HepG2 (cell line): ENCODE measurements at regions of chr3 and their contacts with region 1.

Region 1: DNA sequence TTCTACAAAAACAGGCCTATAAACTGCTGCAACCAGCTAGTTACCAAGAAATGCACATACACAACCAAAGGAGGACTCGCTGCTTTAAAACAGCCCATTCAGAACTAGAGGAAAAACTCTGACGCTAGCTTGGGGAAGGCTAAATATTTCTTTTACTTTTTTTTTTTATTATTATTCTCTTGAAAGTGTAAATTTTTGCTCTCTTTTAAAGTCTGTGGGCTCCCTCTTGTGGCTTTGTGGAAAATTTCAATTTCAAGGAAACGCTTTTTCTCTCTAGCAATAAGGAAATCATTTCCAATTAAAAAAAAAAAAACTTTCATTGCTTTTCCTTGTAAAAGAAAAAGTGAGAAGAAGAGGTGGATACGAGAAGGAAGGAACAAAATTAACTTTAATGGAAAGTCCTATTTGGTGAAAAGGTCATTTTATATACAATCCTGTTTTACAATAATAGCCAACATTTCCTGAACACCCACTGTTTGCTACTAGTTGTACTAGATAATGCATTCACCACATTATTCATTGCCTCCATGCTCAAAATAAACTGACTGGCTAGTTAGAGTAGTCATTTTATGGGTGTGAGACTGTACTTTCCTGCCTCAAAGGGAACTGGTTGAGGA is 51.2 kb upstream of the SAMMSON start:
- DNase-seq: peak; percentile 4
- ATAC-seq: no peak
- H3K4me3 ChIP-seq: no peak overlapping the region
- H3K27ac ChIP-seq: no peak overlapping the region
- H3K4me1 ChIP-seq: no peaks in the 10 kb centered on the region
- H3K27me3 ChIP-seq: no peaks in the 10 kb centered on the region; a peak in 1 of 5 replicates
- CTCF ChIP-seq: peak; percentile 20; the same call in 1 of the 2 replicates
- EP300 ChIP-seq: no peak
- POLR2A ChIP-seq: no peak
- RAD21 ChIP-seq: no peak

Region 2: GRCh38 chr3:69921651-69922050 is 26.7 kb before region 1 on chr3:
- CTCF ChIA-PET with region 1: no interaction called
- POLR2A ChIA-PET with region 1: no interaction called
- in situ Hi-C with region 1: no loop called
- intact Hi-C with region 1: loop called (anchors 2 kb)
- DNase-seq: no peak
- ATAC-seq: no peak
- H3K4me3 ChIP-seq: no peak overlapping the region
- H3K27ac ChIP-seq: no peak overlapping the region
- H3K4me1 ChIP-seq: no peaks in the 10 kb centered on the region
- H3K27me3 ChIP-seq: no peaks in the 10 kb centered on the region
- CTCF ChIP-seq: no peak
- EP300 ChIP-seq: no peak
- POLR2A ChIP-seq: no peak
- RAD21 ChIP-seq: no peak

Region 3: DNA sequence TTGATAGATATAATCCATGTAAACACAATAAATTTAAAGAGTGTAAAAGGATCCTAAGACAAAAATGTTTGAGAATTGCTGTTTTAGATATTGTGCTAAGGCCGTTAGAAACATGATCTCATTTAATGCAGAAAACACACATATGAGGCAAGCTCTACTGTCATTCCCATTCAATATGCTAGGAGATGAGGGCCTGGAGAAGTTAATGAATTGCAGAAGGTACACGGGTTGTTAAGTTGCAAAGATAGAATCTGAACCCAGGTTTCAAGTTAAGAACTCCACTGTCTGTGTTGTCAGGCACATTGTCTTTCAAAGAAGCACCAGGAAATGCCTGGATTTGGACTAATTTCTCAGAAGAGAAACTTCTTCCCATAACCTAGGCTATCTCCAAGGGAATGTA is 14.0 kb before region 1 on chr3:
- CTCF ChIA-PET with region 1: no interaction called
- POLR2A ChIA-PET with region 1: no interaction called
- in situ Hi-C with region 1: no loop called
- intact Hi-C with region 1: no loop called
- DNase-seq: no peak
- ATAC-seq: no peak
- H3K4me3 ChIP-seq: no peak overlapping the region
- H3K27ac ChIP-seq: no peak overlapping the region
- H3K4me1 ChIP-seq: no peaks in the 10 kb centered on the region
- H3K27me3 ChIP-seq: no peaks in the 10 kb centered on the region; a peak in 1 of 5 replicates
- CTCF ChIP-seq: no peak
- EP300 ChIP-seq: no peak
- POLR2A ChIP-seq: no peak
- RAD21 ChIP-seq: no peak

Region 4: GRCh38 chr3:69961706-69962439 is 13.5 kb after region 1 on chr3:
- CTCF ChIA-PET with region 1: no interaction called
- POLR2A ChIA-PET with region 1: no interaction called
- in situ Hi-C with region 1: no loop called
- intact Hi-C with region 1: no loop called
- DNase-seq: no peak
- ATAC-seq: no peak
- H3K4me3 ChIP-seq: no peak overlapping the region
- H3K27ac ChIP-seq: no peak overlapping the region
- H3K4me1 ChIP-seq: no peaks in the 10 kb centered on the region
- H3K27me3 ChIP-seq: 0 out of 5 replicates have a peak, but pooled peaks cover 0 to 3% of the 10 kb centered on the region in 2 experiments
- CTCF ChIP-seq: no peak
- EP300 ChIP-seq: no peak
- POLR2A ChIP-seq: no peak
- RAD21 ChIP-seq: no peak